ENCODE measurements at regions of chr14 and their contacts with region 1.

Region 1: GRCh38 chr14:23478111-23478759 is 8.7 kb downstream of the NGDN start:
- DNase-seq: peak; percentile 33
- H3K4me3 ChIP-seq: no peak overlapping the region
- CTCF ChIP-seq: peak; percentile 50

Region 2: GRCh38 chr14:23494223-23494622 is 16.0 kb after region 1 on chr14:
- CTCF ChIA-PET with region 1: interaction called, 14 read pairs
- POLR2A ChIA-PET with region 1: no interaction called
- DNase-seq: peak; percentile 31
- H3K4me3 ChIP-seq: no peak overlapping the region
- CTCF ChIP-seq: no peak

Region 3: GRCh38 chr14:23528555-23528954 is 50.3 kb after region 1 on chr14:
- CTCF ChIA-PET with region 1: interaction called, 12 read pairs
- POLR2A ChIA-PET with region 1: no interaction called
- DNase-seq: no peak
- H3K4me3 ChIP-seq: no peak overlapping the region
- CTCF ChIP-seq: no peak

Region 4: GRCh38 chr14:23539248-23540140 is 61.3 kb after region 1 on chr14:
- CTCF ChIA-PET with region 1: interaction called, 72 read pairs
- POLR2A ChIA-PET with region 1: no interaction called
- DNase-seq: no peak
- H3K4me3 ChIP-seq: no peak overlapping the region
- CTCF ChIP-seq: peak; percentile 64